ENCODE measurements at regions of chr3 and their contacts with region 1.

Region 1: DNA sequence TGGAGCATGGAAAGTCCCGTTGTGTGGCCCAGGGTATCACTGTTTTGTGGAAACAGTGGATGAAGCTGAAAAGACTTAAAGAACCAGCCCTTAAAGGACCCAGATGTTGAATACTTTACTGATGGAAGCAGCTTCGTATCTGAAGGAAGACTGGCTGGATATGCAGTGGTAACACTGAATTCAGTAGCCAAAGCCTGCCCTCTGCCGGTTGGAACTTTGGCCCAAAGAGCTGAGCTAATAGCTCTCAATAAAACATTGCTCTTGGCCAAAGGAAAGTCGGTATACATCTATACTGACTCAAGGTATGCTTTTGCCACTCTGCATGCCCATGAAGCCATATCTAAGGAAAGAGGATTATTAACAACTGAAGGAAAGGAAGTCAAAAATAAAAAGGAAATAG is 885.4 kb downstream of the PDCD6IP start:
- DNase-seq: peak; percentile 34
- H3K4me3 ChIP-seq: no peak overlapping the region
- H3K27ac ChIP-seq: no peak overlapping the region
- H3K4me1 ChIP-seq: no peaks in the 10 kb centered on the region
- H3K27me3 ChIP-seq: no peaks in the 10 kb centered on the region
- CTCF ChIP-seq: peak in 1 of 2 donors; percentile 26

Region 2: GRCh38 chr3:34260271-34261006 is 423.4 kb before region 1 on chr3:
- CTCF ChIA-PET with region 1: interaction called, 5 read pairs
- dilution Hi-C with region 1: no loop called
- in situ Hi-C with region 1: no loop called
- intact Hi-C with region 1: loop called (anchors 1 kb)
- DNase-seq: peak; percentile 6
- H3K4me3 ChIP-seq: no peak overlapping the region
- H3K27ac ChIP-seq: no peak overlapping the region
- H3K4me1 ChIP-seq: no peaks in the 10 kb centered on the region
- H3K27me3 ChIP-seq: no peaks in the 10 kb centered on the region
- CTCF ChIP-seq: peak; percentile 57 to 71